PC-9 (cell line): ENCODE measurements at regions of chr1 and their contacts with region 1.

Region 1: DNA sequence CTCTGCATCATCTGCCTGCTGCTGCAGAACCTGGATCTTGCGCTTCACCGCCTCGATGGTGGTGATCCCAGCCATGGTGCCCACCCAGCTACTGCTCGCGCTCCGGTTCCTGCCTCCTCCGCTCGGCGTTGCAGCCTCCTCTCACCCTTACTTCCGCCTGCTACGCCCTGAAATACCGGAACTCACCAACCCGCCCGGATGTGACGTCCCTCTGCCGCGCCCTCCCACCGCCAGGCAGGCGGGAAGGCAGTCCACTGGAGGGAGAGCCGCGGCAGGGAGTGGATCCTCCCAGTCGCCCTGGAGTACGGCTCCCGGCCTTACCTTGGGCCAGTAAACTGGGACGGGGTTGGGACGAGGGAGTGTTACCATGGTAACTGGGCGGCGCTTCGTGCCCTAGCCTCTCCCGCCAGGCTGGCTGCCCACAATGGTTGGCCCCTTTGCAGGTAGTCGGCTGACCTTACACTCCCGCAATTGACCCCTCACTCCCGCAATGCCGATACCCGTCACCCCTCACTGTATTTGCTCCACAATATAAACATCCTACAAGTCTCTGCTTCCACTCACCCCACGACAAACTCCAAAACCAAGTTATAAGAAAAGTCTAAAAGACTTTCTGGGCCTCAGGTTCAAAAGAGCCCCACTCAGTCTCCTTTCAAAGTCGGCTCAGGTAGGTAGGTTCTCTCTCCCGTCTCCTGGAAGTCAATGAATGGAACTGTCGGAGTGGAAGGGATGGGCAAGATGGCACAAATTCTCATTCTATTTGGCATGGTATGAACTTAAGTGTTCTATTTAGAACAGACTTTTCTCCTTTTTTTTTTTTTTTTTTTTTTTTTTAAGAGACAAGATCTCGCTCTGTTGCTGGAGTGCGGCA is 8.6 kb downstream of the TPM3 start:
- DNase-seq: peak; percentile 97 to 98
- H3K4me3 ChIP-seq: peak overlapping the region; percentile 83
- H3K27ac ChIP-seq: peak overlapping the region; percentile 74
- H3K4me1 ChIP-seq: peaks cover 24% of the 10 kb centered on the region
- H3K27me3 ChIP-seq: no peaks in the 10 kb centered on the region
- CTCF ChIP-seq: no peak

Region 2: DNA sequence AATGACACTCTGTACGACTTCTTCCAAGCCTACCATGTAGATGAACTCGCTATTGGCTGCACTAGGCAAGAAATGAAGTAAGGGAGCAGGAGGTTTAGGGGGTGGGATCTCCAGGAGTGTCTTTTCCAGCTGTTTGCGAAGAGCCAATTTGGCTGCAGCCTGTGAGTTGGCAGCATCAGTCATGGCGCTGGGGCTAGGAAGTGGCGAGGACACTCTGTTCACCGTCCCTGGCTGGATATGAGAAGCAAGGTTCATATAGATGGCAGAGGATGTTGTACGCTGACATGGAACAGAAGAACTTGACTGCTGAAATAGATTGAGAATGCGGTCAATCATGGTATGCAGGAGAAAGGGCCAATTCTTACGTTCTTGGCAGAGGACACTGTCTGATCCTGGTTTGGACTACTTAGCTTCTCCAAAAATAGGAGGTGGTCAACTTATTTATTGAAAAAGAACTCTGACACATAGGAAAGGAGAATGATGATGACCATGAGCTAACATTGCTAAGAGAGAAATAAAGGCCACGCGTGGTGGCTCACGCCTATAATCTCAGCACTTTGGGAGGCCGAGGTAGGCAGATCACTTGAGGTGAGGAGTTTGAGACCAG is 366.9 kb before region 1 on chr1:
- CTCF ChIA-PET with region 1: no interaction called
- POLR2A ChIA-PET with region 1: no interaction called
- intact Hi-C with region 1: no loop called
- DNase-seq: no peak
- H3K4me3 ChIP-seq: no peak overlapping the region
- H3K27ac ChIP-seq: no peak overlapping the region
- H3K4me1 ChIP-seq: no peaks in the 10 kb centered on the region
- H3K27me3 ChIP-seq: no peaks in the 10 kb centered on the region
- CTCF ChIP-seq: no peak

Region 3: GRCh38 chr1:154220071-154220969 is 37.0 kb after region 1 on chr1 and contains the start of gene UBAP2L:
- CTCF ChIA-PET with region 1: no interaction called
- POLR2A ChIA-PET with region 1: no interaction called
- intact Hi-C with region 1: loop called (anchors 1 kb)
- DNase-seq: peak; percentile 94 to 98
- H3K4me3 ChIP-seq: peak within 1 kb of the TSS; percentile 99
- H3K27ac ChIP-seq: peak within 1 kb of the TSS; percentile 97
- H3K4me1 ChIP-seq: peaks cover 33% of the 10 kb centered on the region
- H3K27me3 ChIP-seq: no peaks in the 10 kb centered on the region
- CTCF ChIP-seq: no peak
- total RNA-seq, gene UBAP2L: 101 and 157 TPM in 2 replicates

Region 4: GRCh38 chr1:154546264-154547063 is 363.2 kb after region 1 on chr1:
- CTCF ChIA-PET with region 1: no interaction called
- POLR2A ChIA-PET with region 1: interaction called, 9 read pairs
- intact Hi-C with region 1: loop called (anchors 2 kb)
- DNase-seq: peak; percentile 39 to 66
- H3K4me3 ChIP-seq: no peak overlapping the region
- H3K27ac ChIP-seq: no peak overlapping the region
- H3K4me1 ChIP-seq: no peaks in the 10 kb centered on the region
- H3K27me3 ChIP-seq: peaks cover 33% of the 10 kb centered on the region
- CTCF ChIP-seq: peak; percentile 85